Heart right ventricle (tissue), 16 donors: ENCODE measurements at regions of chr7 and their contacts with region 1.

Region 1: DNA sequence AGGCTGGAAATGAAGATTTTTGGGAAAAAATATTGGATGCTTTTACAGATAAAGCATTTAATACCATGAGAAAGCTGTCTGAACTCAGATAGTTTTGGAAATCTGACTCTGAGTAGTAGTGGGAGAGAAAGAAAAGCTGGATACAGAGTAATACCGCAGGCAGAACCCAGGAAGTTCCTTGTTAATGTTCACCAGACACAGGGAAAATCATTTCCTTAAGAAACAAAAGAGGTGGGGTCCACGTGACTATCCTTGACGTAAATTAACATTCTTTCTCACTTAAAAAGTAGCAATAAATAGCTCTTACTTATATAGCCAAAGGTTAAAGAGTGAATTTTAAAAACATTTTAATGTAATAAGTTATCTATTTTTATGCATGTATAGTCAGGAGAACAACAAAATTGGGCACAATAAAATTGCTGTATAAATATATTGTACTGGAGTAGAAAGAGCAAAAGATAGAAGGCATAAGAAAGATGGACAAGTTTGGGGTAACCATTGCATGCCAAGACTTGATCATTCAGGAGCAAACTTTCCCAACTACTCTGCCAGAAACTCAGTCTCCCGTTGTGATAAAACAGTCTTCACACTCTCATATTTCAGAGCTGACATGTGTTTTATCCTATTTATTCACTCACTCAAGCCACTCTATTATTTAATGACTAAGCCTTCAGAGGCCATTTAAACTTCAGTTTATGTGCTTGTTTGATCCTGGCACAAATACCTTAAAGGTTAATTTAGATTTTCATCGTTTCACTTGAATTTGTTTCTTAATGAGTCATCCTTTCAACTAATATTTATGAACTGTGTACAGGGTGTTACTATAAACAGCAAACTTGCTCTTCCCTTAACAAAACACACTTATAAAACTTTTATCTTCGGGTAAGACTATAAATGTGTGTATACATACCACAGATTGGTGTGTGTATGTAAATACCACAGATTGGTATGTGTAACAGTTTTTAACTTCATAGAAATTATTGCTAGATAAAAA is 143.1 kb downstream of the GNAI1 start:
- DNase-seq: peak in 1 of 2 donors; percentile 12
- ATAC-seq: peak in 7 of 8 donors; percentile 64 to 88 (median 83)
- H3K4me3 ChIP-seq: no peak overlapping the region
- H3K27ac ChIP-seq: peak overlapping the region in 8 of 10 donors; percentile 23 to 84 (median 72)
- H3K4me1 ChIP-seq: peaks cover 0 to 64% (median 30%) of the 10 kb centered on the region in 9 donors
- H3K27me3 ChIP-seq: no peaks in the 10 kb centered on the region
- CTCF ChIP-seq: no peak

Region 2: GRCh38 chr7:80225361-80225760 is 52.4 kb before region 1 on chr7:
- intact Hi-C with region 1: loop called in 1 of 10 experiments (anchors 10 kb)
- DNase-seq: no peak
- ATAC-seq: peak in 2 of 8 donors; percentile 34 to 53
- H3K4me3 ChIP-seq: no peak overlapping the region
- H3K27ac ChIP-seq: no peak overlapping the region
- H3K4me1 ChIP-seq: peaks cover 0 to 19% (median 0%) of the 10 kb centered on the region in 9 donors
- H3K27me3 ChIP-seq: no peaks in the 10 kb centered on the region
- CTCF ChIP-seq: no peak